ENCODE measurements at regions of chr1 and their contacts with region 1.

Region 1: GRCh38 chr1:92817986-92818764 is 13.7 kb upstream of the RPL5 start:
- DNase-seq: no peak

Region 2: DNA sequence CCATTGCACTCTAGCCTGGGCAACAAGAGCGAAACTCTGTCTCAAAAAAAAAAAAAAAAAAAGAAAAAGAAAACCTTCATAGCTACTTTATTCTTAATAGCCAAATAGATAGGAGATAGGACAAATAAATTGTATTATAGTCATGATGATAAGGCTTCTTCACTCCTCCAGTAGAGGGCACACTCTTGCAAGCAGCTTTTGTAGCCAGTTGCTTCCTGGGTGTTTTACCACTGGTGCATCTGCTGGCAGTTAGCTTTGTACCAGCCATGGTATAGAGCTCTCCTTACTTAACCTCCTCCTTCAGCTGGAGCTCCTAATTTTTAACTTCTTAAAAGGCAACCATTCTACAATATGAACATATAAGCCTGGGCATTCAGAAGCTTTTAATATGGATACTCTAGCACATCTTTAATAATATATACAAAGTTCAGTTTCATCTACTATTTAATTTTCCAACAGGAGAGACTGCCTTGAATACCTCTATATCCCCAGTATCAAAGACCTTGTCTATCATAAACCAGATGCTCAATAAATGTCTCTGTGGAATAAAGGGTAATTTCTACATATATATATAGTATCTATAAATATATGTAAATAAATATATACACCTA is 69.0 kb before region 1 on chr1:
- in situ Hi-C with region 1: loop called (anchors 5 kb)
- DNase-seq: peak; percentile 22

Region 3: GRCh38 chr1:92877792-92878191 is 59.6 kb after region 1 on chr1:
- in situ Hi-C with region 1: no loop called
- DNase-seq: peak; percentile 73

Region 4: GRCh38 chr1:92909321-92909720 is 91.1 kb after region 1 on chr1:
- in situ Hi-C with region 1: no loop called
- DNase-seq: peak; percentile 40

Measured in G401 (cell line).